Esophagus muscularis mucosa (tissue), 4 donors: ENCODE measurements at regions of chr6 and their contacts with region 1.

Region 1: DNA sequence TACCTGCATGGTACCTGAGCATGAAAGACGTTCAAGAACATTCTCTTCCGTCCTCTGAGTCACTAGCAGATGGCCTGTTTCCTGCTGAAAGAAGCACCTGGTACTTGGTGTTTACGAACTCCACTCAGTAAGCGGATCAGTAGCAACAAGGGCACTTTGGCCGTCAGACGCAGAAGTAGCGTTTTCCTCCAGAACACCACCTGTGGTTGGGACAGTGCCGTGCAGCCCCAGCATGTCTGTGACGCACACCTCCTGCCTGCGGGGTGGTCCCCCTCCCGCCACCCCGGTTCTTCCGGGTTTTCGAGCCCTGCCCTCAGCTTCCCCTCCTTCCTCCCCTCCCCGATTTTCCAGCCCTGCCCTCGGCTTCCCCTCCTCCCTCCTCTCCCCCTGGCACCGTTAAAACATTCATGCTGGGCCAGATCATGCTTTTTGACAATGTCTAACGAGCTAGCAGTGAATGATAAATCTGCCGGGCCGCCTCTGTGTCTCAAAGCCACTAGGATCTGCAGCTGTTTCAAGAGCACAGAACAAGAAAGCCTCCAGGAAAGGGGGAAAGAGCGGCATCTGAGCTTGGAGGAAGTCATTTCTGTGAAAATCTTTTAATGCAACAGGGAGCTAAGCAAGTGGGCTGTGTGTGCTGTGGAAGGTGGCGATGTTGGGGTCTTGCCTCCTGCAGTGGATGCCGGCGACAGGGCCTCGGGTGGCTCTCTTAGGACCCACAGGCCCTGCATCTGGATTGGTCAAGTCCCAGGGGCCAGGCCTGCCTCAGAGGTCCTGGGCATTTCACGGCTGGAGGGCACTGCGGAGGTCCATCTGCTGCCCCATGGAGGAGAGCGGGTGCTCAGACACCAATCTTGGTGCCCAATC is 207.9 kb downstream of the ERMARD start:
- DNase-seq: peak; percentile 91
- H3K4me3 ChIP-seq: peak overlapping the region in 3 of 4 donors; percentile 5 to 26 (median 10)
- H3K27ac ChIP-seq: no peak overlapping the region
- H3K4me1 ChIP-seq: peaks cover 13 to 33% (median 26%) of the 10 kb centered on the region in 4 donors
- H3K27me3 ChIP-seq: peaks cover 0 to 19% (median 5%) of the 10 kb centered on the region in 4 donors
- CTCF ChIP-seq: peak in 1 of 3 experiments; percentile 5
- EP300 ChIP-seq: no peak
- POLR2A ChIP-seq: no peak

Region 2: GRCh38 chr6:170087941-170088581 is 128.7 kb after region 1 on chr6:
- intact Hi-C with region 1: loop called (anchors 10 kb)
- DNase-seq: no peak
- H3K4me3 ChIP-seq: peak overlapping the region in 1 of 4 donors; percentile 39
- H3K27ac ChIP-seq: no peak overlapping the region
- H3K4me1 ChIP-seq: peaks cover 0 to 33% (median 12%) of the 10 kb centered on the region in 4 donors
- H3K27me3 ChIP-seq: no peaks in the 10 kb centered on the region
- CTCF ChIP-seq: no peak
- EP300 ChIP-seq: no peak
- POLR2A ChIP-seq: no peak

Region 3: GRCh38 chr6:170231546-170232185 is 272.3 kb after region 1 on chr6:
- intact Hi-C with region 1: no loop called
- DNase-seq: no peak
- H3K4me3 ChIP-seq: no peak overlapping the region
- H3K27ac ChIP-seq: no peak overlapping the region
- H3K4me1 ChIP-seq: no peaks in the 10 kb centered on the region
- H3K27me3 ChIP-seq: peaks cover 0 to 3% (median 0%) of the 10 kb centered on the region in 4 donors
- CTCF ChIP-seq: no peak
- EP300 ChIP-seq: no peak
- POLR2A ChIP-seq: no peak

Region 4: GRCh38 chr6:170295510-170296422 is 336.4 kb after region 1 on chr6:
- intact Hi-C with region 1: loop called (anchors 10 kb)
- DNase-seq: no peak
- H3K4me3 ChIP-seq: peak overlapping the region; percentile 53 to 68 (median 54)
- H3K27ac ChIP-seq: no peak overlapping the region
- H3K4me1 ChIP-seq: peaks cover 44 to 67% (median 58%) of the 10 kb centered on the region in 4 donors
- H3K27me3 ChIP-seq: peaks cover 13 to 79% (median 53%) of the 10 kb centered on the region in 4 donors
- CTCF ChIP-seq: no peak
- EP300 ChIP-seq: no peak
- POLR2A ChIP-seq: no peak